ENCODE measurements at regions of chr6 and their contacts with region 1.

Region 1: DNA sequence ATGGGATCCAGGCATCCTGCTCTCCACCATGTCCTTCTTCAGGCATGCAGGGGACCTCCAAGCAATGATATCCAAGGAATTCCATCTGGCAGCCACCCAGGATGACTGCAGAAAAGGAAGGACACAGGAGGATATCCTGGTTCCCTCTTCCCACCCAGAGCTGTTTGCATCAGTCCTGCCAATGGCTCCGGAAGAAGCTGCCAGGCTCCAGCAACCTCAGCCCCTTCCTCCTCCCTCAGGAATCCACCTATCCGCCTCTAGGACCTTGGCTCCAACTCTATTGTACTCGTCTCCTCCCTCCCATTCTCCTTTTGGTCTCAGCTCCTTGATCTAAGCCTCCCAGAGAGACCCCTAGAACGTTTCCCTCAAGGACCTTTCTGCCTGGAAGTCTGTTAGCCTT is 733 bp upstream of the PSORS1C2 start:
- DNase-seq: no peak
- H3K4me3 ChIP-seq: no peak overlapping the region
- H3K27ac ChIP-seq: no peak overlapping the region
- H3K4me1 ChIP-seq: no peaks in the 10 kb centered on the region
- H3K27me3 ChIP-seq: no peaks in the 10 kb centered on the region
- CTCF ChIP-seq: no peak

Region 2: GRCh38 chr6:29995340-29995777 is 1144.2 kb before region 1 on chr6:
- intact Hi-C with region 1: no loop called
- DNase-seq: no peak
- H3K4me3 ChIP-seq: no peak overlapping the region
- H3K27ac ChIP-seq: no peak overlapping the region
- H3K4me1 ChIP-seq: no peaks in the 10 kb centered on the region
- H3K27me3 ChIP-seq: no peaks in the 10 kb centered on the region
- CTCF ChIP-seq: no peak

Region 3: GRCh38 chr6:31058128-31058894 is 81.3 kb before region 1 on chr6:
- intact Hi-C with region 1: no loop called
- DNase-seq: no peak
- H3K4me3 ChIP-seq: no peak overlapping the region
- H3K27ac ChIP-seq: no peak overlapping the region
- H3K4me1 ChIP-seq: no peaks in the 10 kb centered on the region
- H3K27me3 ChIP-seq: no peaks in the 10 kb centered on the region
- CTCF ChIP-seq: peak; percentile 45

Region 4: DNA sequence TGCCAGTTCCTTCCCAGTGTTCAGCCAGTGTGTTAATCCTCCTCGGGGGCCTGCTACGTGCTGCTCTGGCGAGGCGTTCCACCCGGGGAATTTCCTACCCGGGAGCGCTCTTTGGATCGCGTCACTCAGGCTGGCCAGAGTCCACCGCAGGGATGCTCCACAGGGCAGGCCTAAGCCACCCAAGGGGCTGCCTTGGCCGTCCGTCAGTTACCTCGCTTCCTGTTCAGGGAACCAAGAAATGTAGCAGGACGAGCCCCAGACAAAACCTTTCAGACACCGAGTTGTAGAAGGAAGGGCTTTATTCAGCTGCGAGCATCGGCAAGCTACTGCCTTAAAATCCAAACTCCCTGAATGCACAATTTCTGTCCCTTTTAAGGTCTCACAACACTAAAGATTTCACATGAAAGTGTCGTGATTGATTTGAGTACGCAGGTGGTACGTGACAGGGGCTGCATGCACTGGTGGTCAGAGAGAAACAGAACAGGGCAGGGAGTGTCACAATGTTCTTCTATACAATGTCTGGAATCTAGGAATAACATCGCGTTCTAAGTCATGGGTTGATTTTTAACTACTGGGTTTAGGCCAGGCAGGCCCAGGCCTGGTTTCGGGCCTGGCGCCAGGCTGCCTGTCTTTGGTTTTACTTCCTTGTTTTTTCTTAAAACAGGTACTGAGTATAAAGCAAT is 46.6 kb after region 1 on chr6:
- intact Hi-C with region 1: loop called (anchors 2 kb)
- DNase-seq: peak; percentile 85
- H3K4me3 ChIP-seq: peak overlapping the region; percentile 23
- H3K27ac ChIP-seq: peak overlapping the region; percentile 96
- H3K4me1 ChIP-seq: no peaks in the 10 kb centered on the region
- H3K27me3 ChIP-seq: no peaks in the 10 kb centered on the region
- CTCF ChIP-seq: no peak

Region 5: DNA sequence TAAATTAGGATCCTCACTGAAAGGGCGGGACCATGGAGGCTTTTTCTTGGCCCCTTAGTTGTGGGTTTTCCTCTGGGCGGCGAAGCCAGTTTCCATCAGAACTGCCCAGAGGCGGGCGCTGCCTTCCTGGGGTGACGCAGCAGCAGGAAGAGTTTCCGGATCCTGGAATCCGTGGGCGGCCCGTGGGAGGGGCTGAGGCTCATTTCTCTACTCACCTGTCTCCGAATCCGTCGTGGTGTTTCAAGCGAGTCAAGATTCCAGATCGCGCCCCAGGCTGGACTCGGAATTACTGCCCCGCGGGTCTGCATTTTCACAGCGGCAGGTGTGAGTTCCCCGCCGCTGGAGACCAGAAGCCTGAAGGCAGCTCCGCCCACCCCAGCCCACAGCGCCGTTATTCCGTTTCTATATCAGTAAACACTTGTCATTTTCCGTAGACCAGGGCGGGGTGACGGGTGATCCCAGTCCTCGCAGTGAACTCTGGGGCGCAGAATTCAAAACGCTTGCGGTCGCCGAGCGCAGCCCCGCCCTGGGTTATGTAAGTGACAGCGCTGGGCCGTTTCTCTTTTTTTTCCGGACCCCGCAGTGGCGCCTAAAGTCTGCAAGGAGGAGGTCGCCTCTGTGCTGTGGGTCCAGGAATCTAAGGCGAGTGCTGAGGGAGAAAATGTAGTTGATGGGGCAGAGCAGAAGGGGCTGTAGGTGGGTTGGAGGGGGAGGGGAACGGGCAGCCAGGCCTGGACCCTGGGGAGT is 58.1 kb after region 1 on chr6:
- intact Hi-C with region 1: loop called (anchors 2 kb)
- DNase-seq: peak; percentile 96
- H3K4me3 ChIP-seq: peak overlapping the region; percentile 54
- H3K27ac ChIP-seq: peak overlapping the region; percentile 99
- H3K4me1 ChIP-seq: peaks cover 7% of the 10 kb centered on the region
- H3K27me3 ChIP-seq: no peaks in the 10 kb centered on the region
- CTCF ChIP-seq: no peak

Region 6: GRCh38 chr6:31366693-31367470 is 227.3 kb after region 1 on chr6:
- intact Hi-C with region 1: loop called (anchors 5 kb)
- DNase-seq: peak; percentile 94
- H3K4me3 ChIP-seq: peak overlapping the region; percentile 3
- H3K27ac ChIP-seq: no peak overlapping the region
- H3K4me1 ChIP-seq: no peaks in the 10 kb centered on the region
- H3K27me3 ChIP-seq: no peaks in the 10 kb centered on the region
- CTCF ChIP-seq: peak; percentile 80

Region 7: DNA sequence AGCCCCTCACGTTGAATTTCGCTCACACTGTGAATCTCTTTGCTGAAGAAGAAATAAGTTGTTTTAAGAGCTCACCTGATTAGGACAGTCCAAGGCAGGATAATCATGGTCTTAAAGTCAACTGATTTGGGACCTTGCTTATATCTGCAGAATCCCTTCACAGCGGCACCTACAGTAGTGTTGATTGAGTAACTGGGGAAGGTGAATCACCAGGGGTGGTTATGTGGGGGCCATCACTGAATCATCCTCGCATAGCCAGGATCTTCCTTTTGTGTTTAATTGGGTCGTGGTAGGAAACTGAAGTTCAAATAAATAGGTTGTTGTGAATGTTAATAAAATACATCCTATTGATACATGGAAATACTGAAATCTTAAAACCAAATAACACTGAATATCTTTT is 243.6 kb after region 1 on chr6:
- intact Hi-C with region 1: loop called (anchors 5 kb)
- DNase-seq: no peak
- H3K4me3 ChIP-seq: no peak overlapping the region
- H3K27ac ChIP-seq: no peak overlapping the region
- H3K4me1 ChIP-seq: no peaks in the 10 kb centered on the region
- H3K27me3 ChIP-seq: no peaks in the 10 kb centered on the region
- CTCF ChIP-seq: no peak

Region 8: GRCh38 chr6:31619805-31620585 is 480.4 kb after region 1 on chr6:
- intact Hi-C with region 1: no loop called
- DNase-seq: peak; percentile 97
- H3K4me3 ChIP-seq: peak overlapping the region; percentile 68
- H3K27ac ChIP-seq: peak overlapping the region; percentile 93
- H3K4me1 ChIP-seq: peaks cover 4% of the 10 kb centered on the region
- H3K27me3 ChIP-seq: no peaks in the 10 kb centered on the region
- CTCF ChIP-seq: no peak

Region 9: DNA sequence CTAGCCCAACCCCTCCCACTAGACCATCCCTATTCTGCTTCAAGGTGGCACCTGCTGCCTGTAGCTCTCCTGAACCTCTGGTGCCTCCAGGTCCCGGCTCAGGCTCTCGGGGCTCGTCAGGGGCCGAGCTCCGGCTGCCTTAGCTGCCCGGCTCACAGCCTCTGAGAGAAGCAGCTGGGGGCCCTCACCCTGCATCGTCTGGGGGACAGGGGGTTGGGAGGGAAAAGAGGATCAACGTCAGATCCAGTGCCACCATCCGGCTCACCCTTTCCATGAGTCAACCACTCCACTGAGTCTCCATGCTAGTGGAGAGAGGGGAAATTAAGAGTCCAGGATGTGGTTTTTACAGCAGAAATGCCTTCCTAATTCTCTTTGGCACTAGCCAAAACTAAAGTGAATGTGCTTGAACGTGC is 499.9 kb after region 1 on chr6:
- intact Hi-C with region 1: no loop called
- DNase-seq: no peak
- H3K4me3 ChIP-seq: no peak overlapping the region
- H3K27ac ChIP-seq: no peak overlapping the region
- H3K4me1 ChIP-seq: no peaks in the 10 kb centered on the region
- H3K27me3 ChIP-seq: no peaks in the 10 kb centered on the region
- CTCF ChIP-seq: no peak

Measured in colonic mucosa (tissue), 4 donors.